Keratinocyte (primary cell): ENCODE measurements at regions of chr21 and their contacts with region 1.

Region 1: GRCh38 chr21:39715804-39716397 is 29.1 kb upstream of the IGSF5 start:
- DNase-seq: no peak
- H3K4me3 ChIP-seq: no peak overlapping the region
- H3K27ac ChIP-seq: no peak overlapping the region
- H3K4me1 ChIP-seq: no peaks in the 10 kb centered on the region
- H3K27me3 ChIP-seq: no peaks in the 10 kb centered on the region
- CTCF ChIP-seq: peak in 2 of 3 experiments; percentile 29 to 46

Region 2: GRCh38 chr21:39518138-39518846 is 197.6 kb before region 1 on chr21:
- dilution Hi-C with region 1: loop called (anchors 25 kb)
- DNase-seq: peak; percentile 11
- H3K4me3 ChIP-seq: no peak overlapping the region
- H3K27ac ChIP-seq: no peak overlapping the region
- H3K4me1 ChIP-seq: no peaks in the 10 kb centered on the region
- H3K27me3 ChIP-seq: no peaks in the 10 kb centered on the region
- CTCF ChIP-seq: peak; percentile 68 to 90 (median 87)